Activated naive CD4-positive, alpha-beta T cell treated with anti-CD3 and anti-CD28 coated beads for 36 hours (primary cell): ENCODE measurements at regions of chr5 and their contacts with region 1.

Region 1: GRCh38 chr5:142769741-142770631 is at the start of gene ARHGAP26:
- DNase-seq: peak; percentile 94
- H3K4me3 Mint-ChIP-seq: peak within 1 kb of the TSS; percentile 95
- H3K27ac Mint-ChIP-seq: peak within 1 kb of the TSS; percentile 81
- H3K4me1 Mint-ChIP-seq: peaks cover 37% of the 10 kb centered on the region
- H3K27me3 Mint-ChIP-seq: no peaks in the 10 kb centered on the region
- total RNA-seq, gene ARHGAP26: 17.0 to 19.5 TPM

Region 2: DNA sequence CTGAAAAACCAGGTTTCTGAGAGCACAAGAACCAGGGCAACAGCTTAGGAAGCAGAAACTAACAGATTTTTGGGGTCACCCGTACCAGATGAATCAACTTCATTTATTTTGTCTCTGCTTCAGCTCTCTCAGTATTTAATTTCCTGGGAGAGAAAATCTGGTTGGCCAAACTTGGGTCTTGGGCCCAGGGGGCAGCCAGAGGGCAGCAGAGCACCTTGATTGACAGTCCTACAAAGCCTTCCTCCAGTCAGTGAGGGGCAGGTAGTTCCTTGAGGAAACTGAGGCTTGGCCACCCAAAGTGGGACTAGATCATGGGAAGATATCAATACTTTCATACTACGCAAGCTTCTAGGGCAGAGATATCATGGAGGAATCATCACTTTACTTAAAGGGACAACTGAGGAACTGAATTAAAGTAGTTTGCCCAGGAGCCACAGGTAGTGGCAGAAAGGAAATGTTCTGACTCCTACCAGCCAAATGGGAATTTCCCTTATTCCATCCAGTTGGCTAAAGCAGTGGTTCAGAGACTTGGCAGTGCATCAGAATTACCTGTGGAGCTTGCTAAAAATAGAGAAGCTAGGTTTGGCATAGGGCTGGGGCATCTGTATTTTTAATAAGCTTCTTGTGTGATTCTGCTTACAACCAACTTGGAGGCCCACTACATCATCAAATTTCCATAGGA is 21.3 kb before region 1 on chr5:
- CTCF ChIA-PET with region 1: interaction called, 16 read pairs
- intact Hi-C with region 1: loop called (anchors 1 kb)
- DNase-seq: peak; percentile 76
- H3K4me3 Mint-ChIP-seq: no peak overlapping the region
- H3K27ac Mint-ChIP-seq: no peak overlapping the region
- H3K4me1 Mint-ChIP-seq: peaks cover 13% of the 10 kb centered on the region
- H3K27me3 Mint-ChIP-seq: no peaks in the 10 kb centered on the region

Region 3: DNA sequence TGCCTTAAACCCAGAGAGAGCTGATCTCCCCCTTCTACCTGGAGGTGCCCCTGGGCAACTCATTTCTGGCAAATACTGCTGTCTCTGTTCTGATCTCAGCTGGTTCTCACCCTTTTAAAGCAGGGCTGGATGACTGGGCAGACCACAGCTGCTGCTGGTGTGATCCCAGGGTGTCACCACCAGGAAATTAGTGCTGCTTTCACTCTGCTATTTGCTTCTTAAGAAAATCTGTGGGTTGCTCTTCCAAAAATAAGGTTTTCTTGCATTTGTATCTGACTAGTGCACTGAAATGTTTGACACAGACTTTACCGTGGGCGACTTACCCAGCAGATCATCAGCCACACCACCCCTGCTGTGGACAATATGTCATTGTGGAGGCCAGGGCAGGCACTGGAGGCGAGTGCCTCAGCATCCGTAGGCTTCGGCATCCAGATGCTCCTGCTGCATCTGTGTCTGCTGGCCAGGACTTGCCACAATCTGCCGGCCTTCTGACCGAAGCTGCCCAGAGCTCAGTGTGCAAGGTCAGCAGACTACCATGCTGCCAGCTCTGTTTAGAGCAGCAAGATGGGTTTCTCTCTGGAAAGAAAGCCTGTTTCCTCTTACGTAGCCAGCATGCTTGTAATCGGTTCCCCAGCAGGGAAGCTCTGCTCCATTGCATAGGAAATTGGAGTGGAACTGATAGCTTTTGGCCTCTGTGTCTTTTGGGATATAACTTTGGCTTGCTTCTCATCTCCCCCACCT is 13.8 kb after region 1 on chr5:
- CTCF ChIA-PET with region 1: interaction called, 25 read pairs
- intact Hi-C with region 1: loop called (anchors 1 kb)
- DNase-seq: peak; percentile 88
- H3K4me3 Mint-ChIP-seq: no peak overlapping the region
- H3K27ac Mint-ChIP-seq: peak overlapping the region; percentile 34
- H3K4me1 Mint-ChIP-seq: peaks cover 62% of the 10 kb centered on the region
- H3K27me3 Mint-ChIP-seq: no peaks in the 10 kb centered on the region

Region 4: DNA sequence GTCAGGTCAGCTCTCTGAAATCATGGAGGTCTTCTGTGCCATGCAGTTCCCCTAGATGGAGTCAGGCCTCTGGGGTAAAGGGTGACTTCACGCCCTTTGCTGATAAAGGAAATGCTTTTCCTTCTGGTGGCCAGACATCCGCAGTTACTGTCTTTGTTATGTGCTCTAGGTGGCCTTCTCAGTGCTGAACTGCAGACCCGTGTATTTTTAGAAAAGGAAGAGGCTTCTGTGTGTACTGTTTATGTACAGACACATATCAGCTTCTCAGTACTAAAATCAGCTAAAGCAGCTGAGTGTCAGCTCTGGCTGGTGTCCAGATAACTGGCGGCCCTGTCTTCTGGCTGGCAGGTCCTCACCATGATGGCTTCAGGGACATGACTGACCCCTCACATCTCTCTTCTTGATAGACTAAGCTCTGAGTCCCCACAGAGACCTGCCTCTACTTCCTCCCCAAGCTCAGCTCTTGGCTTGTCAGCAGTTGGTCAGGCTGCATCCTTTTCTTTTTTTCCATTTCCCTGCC is 75.5 kb after region 1 on chr5:
- CTCF ChIA-PET with region 1: no interaction called
- intact Hi-C with region 1: no loop called
- DNase-seq: no peak
- H3K4me3 Mint-ChIP-seq: no peak overlapping the region
- H3K27ac Mint-ChIP-seq: no peak overlapping the region
- H3K4me1 Mint-ChIP-seq: peaks cover 29% of the 10 kb centered on the region
- H3K27me3 Mint-ChIP-seq: no peaks in the 10 kb centered on the region

Region 5: DNA sequence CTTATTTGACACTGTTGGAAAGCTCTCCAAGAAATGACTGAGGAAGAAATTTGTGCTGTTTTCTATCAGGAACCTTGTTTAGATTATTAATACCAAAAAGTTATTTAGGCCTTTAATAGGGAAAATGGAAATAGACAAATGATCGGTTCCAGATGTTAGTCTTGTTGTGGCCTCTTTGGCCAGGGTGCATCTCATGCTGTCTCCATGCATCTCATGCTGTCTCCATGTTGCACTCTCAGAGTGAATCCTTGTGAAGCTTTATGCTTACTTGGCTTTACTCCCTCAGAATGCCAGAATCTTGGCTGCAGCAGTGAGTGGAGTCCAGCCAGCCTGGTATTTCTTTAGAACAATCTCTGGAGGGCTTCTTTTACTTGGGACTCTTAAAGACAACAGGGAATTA is 185.6 kb after region 1 on chr5:
- CTCF ChIA-PET with region 1: no interaction called
- intact Hi-C with region 1: no loop called
- DNase-seq: no peak
- H3K4me3 Mint-ChIP-seq: no peak overlapping the region
- H3K27ac Mint-ChIP-seq: no peak overlapping the region
- H3K4me1 Mint-ChIP-seq: peaks cover 6% of the 10 kb centered on the region
- H3K27me3 Mint-ChIP-seq: no peaks in the 10 kb centered on the region

Region 6: GRCh38 chr5:144170276-144171024 is 1400.5 kb after region 1 on chr5 and contains the starts of genes KCTD16 and YIPF5:
- CTCF ChIA-PET with region 1: no interaction called
- intact Hi-C with region 1: loop called (anchors 2 kb)
- DNase-seq: peak; percentile 98
- H3K4me3 Mint-ChIP-seq: peak within 1 kb of the TSS; percentile 91
- H3K27ac Mint-ChIP-seq: peak within 1 kb of the TSS; percentile 60
- H3K4me1 Mint-ChIP-seq: peaks cover 39% of the 10 kb centered on the region
- H3K27me3 Mint-ChIP-seq: no peaks in the 10 kb centered on the region
- total RNA-seq, gene KCTD16: 0.27 to 0.29 TPM
- total RNA-seq, gene YIPF5: 31.2 to 33.3 TPM